WTC11 (cell line): ENCODE measurements at regions of chr6 and their contacts with region 1.

Region 1: DNA sequence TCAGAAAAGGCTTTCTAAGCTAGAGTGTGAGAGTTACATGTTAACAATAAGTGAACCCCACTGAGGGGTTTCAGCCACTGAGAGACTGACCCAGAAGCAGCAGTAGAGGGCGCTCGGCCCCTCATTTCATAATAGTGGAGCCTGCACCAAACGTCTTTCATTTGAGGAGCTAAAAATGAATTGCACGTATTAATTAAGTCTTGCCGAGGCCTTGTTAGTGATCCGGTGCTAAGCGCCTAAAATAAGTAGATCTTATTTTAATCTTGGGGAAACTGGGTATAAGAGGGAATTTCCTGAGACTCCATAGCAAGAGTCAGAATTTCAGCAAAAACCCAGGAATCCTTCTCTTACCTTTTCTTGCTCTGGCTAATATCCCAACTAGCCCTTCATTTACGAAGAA is 209.7 kb downstream of the FARS2 start:
- DNase-seq: peak; percentile 72
- ATAC-seq: peak; percentile 71
- H3K4me3 Mint-ChIP-seq: no peak overlapping the region
- H3K27ac Mint-ChIP-seq: no peak overlapping the region
- H3K4me1 Mint-ChIP-seq: peaks cover 29% of the 10 kb centered on the region
- H3K27me3 Mint-ChIP-seq: no peaks in the 10 kb centered on the region
- CTCF ChIP-seq: peak; percentile 55; the same call in 1 of the 2 replicates

Region 2: DNA sequence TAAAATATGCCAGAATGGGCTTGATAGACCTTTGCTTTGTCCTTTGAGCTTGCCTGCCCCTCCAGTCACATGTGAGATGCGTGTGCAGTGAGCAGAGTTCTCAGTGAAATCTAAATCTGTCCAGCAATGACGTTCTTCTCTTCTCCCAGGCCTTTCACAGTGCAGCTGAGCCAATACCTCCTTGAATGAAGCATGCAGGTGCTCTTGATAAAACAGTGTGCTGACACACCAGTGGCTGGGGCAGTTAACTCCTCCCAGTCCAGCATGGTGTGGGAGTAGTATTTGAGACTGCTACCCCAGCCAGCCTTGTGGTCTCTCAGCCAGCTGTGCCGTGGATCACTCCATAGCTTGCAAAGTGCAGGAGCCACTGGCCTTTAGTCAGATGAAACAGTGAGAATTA is 30.8 kb after region 1 on chr6:
- CTCF ChIA-PET with region 1: interaction called, 10 read pairs
- POLR2A ChIA-PET with region 1: interaction called, 3 read pairs
- DNase-seq: no peak
- ATAC-seq: peak; percentile 43; the same call in 1 of the 2 replicates
- H3K4me3 Mint-ChIP-seq: no peak overlapping the region
- H3K27ac Mint-ChIP-seq: 0 out of 2 replicates have a peak overlapping the region, but pooled peaks have one; percentile 39
- H3K4me1 Mint-ChIP-seq: peaks cover 34% of the 10 kb centered on the region
- H3K27me3 Mint-ChIP-seq: no peaks in the 10 kb centered on the region; the same call in 1 of the 2 replicates
- CTCF ChIP-seq: no peak

Region 3: GRCh38 chr6:5670811-5671561 is 199.9 kb after region 1 on chr6:
- CTCF ChIA-PET with region 1: interaction called, 29 read pairs
- POLR2A ChIA-PET with region 1: no interaction called
- DNase-seq: no peak
- ATAC-seq: peak; percentile 14; the same call in 1 of the 2 replicates
- H3K4me3 Mint-ChIP-seq: no peak overlapping the region
- H3K27ac Mint-ChIP-seq: no peak overlapping the region; the same call in 1 of the 2 replicates
- H3K4me1 Mint-ChIP-seq: peaks cover 40% of the 10 kb centered on the region
- H3K27me3 Mint-ChIP-seq: no peaks in the 10 kb centered on the region
- CTCF ChIP-seq: no peak

Region 4: DNA sequence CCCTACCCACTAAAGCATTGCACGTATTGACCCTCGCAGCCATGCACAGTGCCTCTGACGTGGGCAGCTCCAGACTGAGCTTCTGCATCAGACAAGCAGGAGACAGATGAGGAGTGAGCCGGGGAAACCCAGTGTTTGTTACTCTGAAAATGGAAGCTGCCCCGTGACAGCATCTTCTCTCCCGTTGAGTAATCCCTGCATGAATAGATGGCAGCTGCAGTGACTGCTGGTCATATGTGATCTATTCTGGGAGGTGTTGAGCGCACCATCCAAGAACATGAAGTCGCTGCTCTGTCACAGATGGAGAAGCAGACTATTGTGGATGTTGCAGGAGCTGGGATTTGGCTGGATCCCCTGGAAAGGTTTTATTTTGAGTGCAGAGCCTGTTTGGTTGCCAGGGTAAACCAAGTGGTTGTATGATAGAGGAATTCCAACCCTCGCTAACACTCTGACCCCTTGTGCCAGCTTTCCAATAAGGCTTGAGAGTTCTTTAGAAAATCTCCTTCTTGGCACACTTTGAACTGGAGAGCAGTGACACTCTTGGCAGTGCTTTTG is 293.4 kb after region 1 on chr6:
- CTCF ChIA-PET with region 1: interaction called, 21 read pairs
- POLR2A ChIA-PET with region 1: no interaction called
- DNase-seq: no peak
- ATAC-seq: no peak
- H3K4me3 Mint-ChIP-seq: no peak overlapping the region
- H3K27ac Mint-ChIP-seq: no peak overlapping the region
- H3K4me1 Mint-ChIP-seq: peaks cover 5% of the 10 kb centered on the region
- H3K27me3 Mint-ChIP-seq: no peaks in the 10 kb centered on the region
- CTCF ChIP-seq: no peak